Endothelial cell of umbilical vein (primary cell): ENCODE measurements at regions of chr11 and their contacts with region 1.

Region 1: DNA sequence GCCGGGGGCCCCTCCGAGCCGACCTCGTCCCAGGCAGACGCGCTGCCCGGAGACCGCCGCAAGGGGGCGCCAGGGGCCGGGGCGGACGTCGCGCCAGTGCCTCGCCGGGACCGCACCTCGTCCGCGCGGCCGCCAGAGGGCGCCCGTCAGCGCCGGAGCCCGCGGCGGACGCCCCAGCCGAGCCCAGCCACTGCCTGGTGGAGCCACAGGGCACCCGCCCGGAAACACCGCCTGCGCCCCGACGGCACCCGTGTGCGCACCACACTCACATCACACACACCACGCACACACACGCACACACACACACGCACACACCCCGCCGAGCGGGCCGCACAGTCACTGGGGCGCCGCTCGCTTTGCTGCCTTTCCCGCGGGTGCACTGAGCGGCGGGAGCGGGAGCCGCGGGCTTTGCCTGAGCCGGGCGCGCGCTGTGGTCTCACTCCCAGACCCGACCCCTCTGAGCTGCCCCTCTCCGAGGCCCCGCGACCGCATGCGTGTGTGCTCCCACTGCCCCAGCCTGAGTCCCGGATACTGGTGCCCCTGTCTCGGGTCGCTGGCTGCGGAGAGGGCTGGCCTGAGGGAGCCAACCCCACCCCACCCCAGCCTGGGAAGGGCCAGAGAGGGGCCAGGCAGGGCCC is 449.3 kb downstream of the OPCML start:
- DNase-seq: peak; percentile 45
- H3K4me3 ChIP-seq: peak overlapping the region in 2 of 3 experiments; percentile 30 to 34
- H3K27ac ChIP-seq: no peak overlapping the region
- H3K4me1 ChIP-seq: no peaks in the 10 kb centered on the region
- H3K27me3 ChIP-seq: no peaks in the 10 kb centered on the region
- CTCF ChIP-seq: peak; percentile 74 to 99
- POLR2A ChIP-seq: no peak

Region 2: GRCh38 chr11:133163463-133164419 is 80.8 kb after region 1 on chr11:
- CTCF ChIA-PET with region 1: no interaction called
- POLR2A ChIA-PET with region 1: no interaction called
- dilution Hi-C with region 1: no loop called
- intact Hi-C with region 1: loop called (anchors 1 kb)
- DNase-seq: no peak
- H3K4me3 ChIP-seq: no peak overlapping the region
- H3K27ac ChIP-seq: no peak overlapping the region
- H3K4me1 ChIP-seq: no peaks in the 10 kb centered on the region
- H3K27me3 ChIP-seq: no peaks in the 10 kb centered on the region
- CTCF ChIP-seq: peak; percentile 33 to 35
- POLR2A ChIP-seq: no peak

Region 3: DNA sequence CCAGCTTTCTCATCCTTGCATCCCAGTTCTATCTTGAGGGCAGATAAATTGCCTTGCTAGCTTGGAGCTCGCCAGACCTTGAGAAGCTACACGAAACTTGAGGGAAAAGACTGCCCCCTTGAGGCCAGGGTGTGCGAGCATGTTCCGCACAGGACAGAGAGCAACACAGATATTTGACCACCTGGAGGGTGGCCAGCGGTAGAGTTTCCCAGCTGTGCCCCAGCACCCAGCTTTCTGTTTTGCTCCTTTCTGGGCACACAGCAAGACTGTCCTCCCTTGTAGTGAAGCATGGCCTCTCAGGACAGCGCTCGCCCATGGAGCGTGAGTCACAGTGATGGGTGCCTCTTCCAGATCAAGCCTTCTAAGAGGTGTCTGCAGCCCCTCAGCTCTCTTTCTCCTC is 738.8 kb after region 1 on chr11:
- CTCF ChIA-PET with region 1: interaction called, 3 read pairs
- POLR2A ChIA-PET with region 1: no interaction called
- dilution Hi-C with region 1: no loop called
- intact Hi-C with region 1: loop called (anchors 1 kb)
- DNase-seq: no peak
- H3K4me3 ChIP-seq: no peak overlapping the region
- H3K27ac ChIP-seq: no peak overlapping the region
- H3K4me1 ChIP-seq: no peaks in the 10 kb centered on the region
- H3K27me3 ChIP-seq: no peaks in the 10 kb centered on the region
- CTCF ChIP-seq: peak; percentile 35 to 53
- POLR2A ChIP-seq: no peak

Region 4: DNA sequence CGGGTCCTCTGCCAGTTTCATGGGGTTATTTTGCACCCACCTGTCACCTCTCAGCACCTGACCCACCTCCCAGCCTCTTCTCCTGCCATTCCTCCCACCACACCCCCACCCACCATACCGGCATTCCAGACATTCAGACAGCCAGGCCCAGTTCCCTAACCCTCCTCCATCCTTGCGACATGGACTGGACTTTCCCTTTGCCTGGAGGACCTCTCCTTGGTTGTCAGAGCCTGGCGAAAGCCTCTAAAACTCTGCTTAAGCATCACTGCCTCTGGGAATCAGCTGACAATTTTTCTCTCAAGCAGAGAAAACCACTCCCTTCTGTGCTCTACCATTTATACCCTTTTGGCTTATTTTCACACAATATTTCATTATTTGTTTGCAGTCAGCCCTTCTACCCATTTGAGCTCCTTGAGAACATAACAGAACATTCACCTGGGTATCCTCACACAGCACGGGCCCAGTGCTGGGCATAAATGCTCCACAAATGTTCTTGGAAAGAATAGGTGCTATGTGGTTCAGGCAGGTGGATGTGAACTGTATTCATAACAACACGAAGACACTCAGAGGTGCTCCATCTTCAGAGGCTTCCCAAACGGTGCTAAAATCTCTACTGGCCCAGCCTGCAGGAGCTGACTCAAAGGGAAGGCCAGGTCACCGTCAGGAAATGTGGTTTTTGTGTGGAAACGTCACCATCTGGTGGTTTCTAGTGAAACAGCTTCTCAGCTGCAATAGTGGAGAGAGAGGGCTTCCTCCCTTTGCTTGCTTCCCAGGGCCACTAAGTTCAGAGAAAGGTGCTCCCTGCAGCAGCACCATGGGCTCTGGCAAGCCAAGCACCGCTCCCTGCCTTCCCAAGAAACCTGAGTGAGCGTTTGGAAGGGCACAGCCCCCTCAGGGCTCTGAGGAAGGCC is 752.0 kb after region 1 on chr11:
- CTCF ChIA-PET with region 1: interaction called, 66 read pairs
- POLR2A ChIA-PET with region 1: no interaction called
- dilution Hi-C with region 1: no loop called
- intact Hi-C with region 1: loop called (anchors 1 kb)
- DNase-seq: peak; percentile 43
- H3K4me3 ChIP-seq: no peak overlapping the region
- H3K27ac ChIP-seq: no peak overlapping the region
- H3K4me1 ChIP-seq: no peaks in the 10 kb centered on the region
- H3K27me3 ChIP-seq: no peaks in the 10 kb centered on the region
- CTCF ChIP-seq: peak; percentile 60
- POLR2A ChIP-seq: no peak